Activated naive CD4-positive, alpha-beta T cell treated with anti-CD3 and anti-CD28 coated beads for 36 hours (primary cell): ENCODE measurements at regions of chr12 and their contacts with region 1.

Region 1: GRCh38 chr12:118372541-118373495 is at the start of gene TAOK3:
- DNase-seq: peak; percentile 98
- H3K4me3 Mint-ChIP-seq: peak within 1 kb of the TSS; percentile 95
- H3K27ac Mint-ChIP-seq: peak within 1 kb of the TSS; percentile 89
- H3K4me1 Mint-ChIP-seq: peaks cover 40% of the 10 kb centered on the region
- H3K27me3 Mint-ChIP-seq: no peaks in the 10 kb centered on the region
- total RNA-seq, gene TAOK3: 49.1 to 49.2 TPM

Region 2: GRCh38 chr12:117874842-117875434 is 497.9 kb before region 1 on chr12:
- CTCF ChIA-PET with region 1: interaction called, 19 read pairs
- intact Hi-C with region 1: loop called (anchors 1 kb)
- DNase-seq: peak; percentile 81
- H3K4me3 Mint-ChIP-seq: no peak overlapping the region
- H3K27ac Mint-ChIP-seq: no peak overlapping the region
- H3K4me1 Mint-ChIP-seq: peaks cover 8% of the 10 kb centered on the region
- H3K27me3 Mint-ChIP-seq: peaks cover 19% of the 10 kb centered on the region

Region 3: GRCh38 chr12:118061011-118061875 is 311.6 kb before region 1 on chr12 and contains the start of gene WSB2:
- CTCF ChIA-PET with region 1: interaction called, 5 read pairs
- intact Hi-C with region 1: loop called (anchors 2 kb)
- DNase-seq: peak; percentile 51
- H3K4me3 Mint-ChIP-seq: peak within 1 kb of the TSS; percentile 90
- H3K27ac Mint-ChIP-seq: peak within 1 kb of the TSS; percentile 91
- H3K4me1 Mint-ChIP-seq: peaks cover 45% of the 10 kb centered on the region
- H3K27me3 Mint-ChIP-seq: peaks cover 5% of the 10 kb centered on the region
- total RNA-seq, gene WSB2: 31.0 to 31.7 TPM

Region 4: DNA sequence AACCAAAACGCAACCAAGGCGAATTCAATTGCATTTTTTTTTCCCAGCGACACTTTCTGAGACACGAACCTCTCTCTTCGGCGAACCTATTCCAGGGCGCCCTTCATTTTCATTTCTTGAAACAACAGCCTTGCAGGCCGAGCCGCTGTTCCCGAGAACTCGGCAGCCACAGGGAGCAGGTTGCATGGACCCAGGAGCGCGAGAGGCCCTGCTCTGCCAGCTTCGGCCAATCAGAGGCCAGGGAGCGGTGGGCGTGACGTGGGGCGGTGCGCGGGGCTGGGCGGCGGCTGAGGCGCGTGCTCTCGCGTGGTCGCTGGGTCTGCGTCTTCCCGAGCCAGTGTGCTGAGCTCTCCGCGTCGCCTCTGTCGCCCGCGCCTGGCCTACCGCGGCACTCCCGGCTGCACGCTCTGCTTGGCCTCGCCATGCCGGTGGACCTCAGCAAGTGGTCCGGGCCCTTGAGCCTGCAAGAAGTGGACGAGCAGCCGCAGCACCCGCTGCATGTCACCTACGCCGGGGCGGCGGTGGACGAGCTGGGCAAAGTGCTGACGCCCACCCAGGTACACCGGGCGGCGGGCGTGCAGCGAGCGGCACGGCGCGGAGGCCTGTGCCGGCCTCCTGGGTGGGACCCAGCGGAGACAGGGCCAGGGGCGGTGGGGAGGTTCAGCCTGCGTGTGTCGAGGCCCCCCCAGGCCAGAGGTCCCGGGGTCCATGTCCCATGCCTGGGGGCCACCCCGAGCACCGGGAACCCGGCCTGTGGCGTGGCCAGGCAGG is 236.8 kb before region 1 on chr12 and contains the start of gene PEBP1:
- CTCF ChIA-PET with region 1: interaction called, 20 read pairs
- intact Hi-C with region 1: loop called (anchors 1 kb)
- DNase-seq: peak; percentile 95
- H3K4me3 Mint-ChIP-seq: peak within 1 kb of the TSS; percentile 98
- H3K27ac Mint-ChIP-seq: peak within 1 kb of the TSS; percentile 83
- H3K4me1 Mint-ChIP-seq: peaks cover 31% of the 10 kb centered on the region
- H3K27me3 Mint-ChIP-seq: no peaks in the 10 kb centered on the region
- total RNA-seq, gene PEBP1: 117 to 120 TPM

Region 5: DNA sequence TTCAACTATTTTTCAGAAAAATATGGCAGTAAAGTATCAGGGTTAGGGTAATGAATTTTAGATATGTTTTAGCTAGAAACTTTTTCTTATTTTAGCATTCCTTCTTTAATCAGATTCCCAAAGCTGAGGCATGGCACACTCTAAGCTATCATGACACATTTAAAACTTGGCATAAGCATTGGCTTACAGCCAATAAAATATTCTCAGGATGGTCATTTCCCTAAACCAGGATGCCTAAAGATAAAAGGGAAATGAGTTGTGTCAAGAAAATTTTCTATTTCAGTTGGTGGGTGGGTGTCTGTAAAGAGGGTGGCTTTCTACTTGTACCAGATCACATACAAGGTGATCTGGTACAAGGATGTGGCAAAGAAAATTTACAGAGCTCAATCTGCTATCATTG is 189.1 kb before region 1 on chr12:
- CTCF ChIA-PET with region 1: interaction called, 91 read pairs
- intact Hi-C with region 1: loop called (anchors 1 kb)
- DNase-seq: no peak
- H3K4me3 Mint-ChIP-seq: no peak overlapping the region
- H3K27ac Mint-ChIP-seq: no peak overlapping the region
- H3K4me1 Mint-ChIP-seq: peaks cover 18% of the 10 kb centered on the region
- H3K27me3 Mint-ChIP-seq: no peaks in the 10 kb centered on the region

Region 6: GRCh38 chr12:118357257-118358007 is 15.4 kb before region 1 on chr12:
- CTCF ChIA-PET with region 1: interaction called, 38 read pairs
- intact Hi-C with region 1: loop called (anchors 1 kb)
- DNase-seq: peak; percentile 78
- H3K4me3 Mint-ChIP-seq: peak overlapping the region; percentile 73
- H3K27ac Mint-ChIP-seq: peak overlapping the region; percentile 90
- H3K4me1 Mint-ChIP-seq: peaks cover 55% of the 10 kb centered on the region
- H3K27me3 Mint-ChIP-seq: no peaks in the 10 kb centered on the region

Region 7: DNA sequence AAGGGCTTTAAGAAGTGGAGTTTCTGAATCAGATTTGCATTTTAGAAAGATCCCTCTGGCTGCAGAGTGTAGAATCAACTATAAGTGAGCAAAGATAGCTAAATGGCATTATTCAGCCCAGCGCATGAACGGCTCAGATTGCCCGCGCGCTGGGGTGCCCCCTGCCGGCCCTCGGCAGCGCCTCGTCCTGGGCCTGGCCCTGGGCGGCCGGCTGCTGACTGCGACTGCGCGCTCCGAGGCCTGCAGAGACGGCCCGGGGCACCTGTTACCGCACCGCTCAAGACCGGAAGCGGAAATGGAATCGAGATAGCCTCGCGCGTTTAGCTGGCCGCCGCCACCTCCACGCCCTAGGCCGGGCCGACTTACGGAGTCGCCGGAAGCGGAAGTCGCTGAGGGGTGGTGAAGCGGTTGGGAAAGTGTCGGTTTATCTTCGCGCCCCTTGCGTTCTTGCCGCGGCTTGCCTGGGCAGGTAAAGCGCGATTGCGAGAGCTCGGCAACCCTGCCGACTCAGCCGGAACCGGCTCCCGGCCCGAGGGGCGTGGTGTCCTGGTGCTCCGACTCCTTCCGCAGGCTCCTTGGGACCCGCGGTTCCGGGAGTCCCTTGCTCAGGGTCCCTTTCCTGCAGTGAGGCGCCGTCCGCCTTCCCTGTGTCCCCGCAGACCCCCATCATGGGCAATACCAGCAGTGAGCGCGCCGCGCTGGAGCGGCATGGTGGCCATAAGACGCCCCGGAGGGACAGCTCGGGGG is 1294.9 kb after region 1 on chr12 and contains the start of gene PRKAB1:
- CTCF ChIA-PET with region 1: interaction called, 5 read pairs
- intact Hi-C with region 1: loop called (anchors 1 kb)
- DNase-seq: peak; percentile 96
- H3K4me3 Mint-ChIP-seq: peak within 1 kb of the TSS; percentile 90
- H3K27ac Mint-ChIP-seq: peak within 1 kb of the TSS; percentile 95
- H3K4me1 Mint-ChIP-seq: peaks cover 52% of the 10 kb centered on the region
- H3K27me3 Mint-ChIP-seq: no peaks in the 10 kb centered on the region
- total RNA-seq, gene PRKAB1: 34.3 to 39.8 TPM